Keratinocyte (primary cell): ENCODE measurements at regions of chr4 and their contacts with region 1.

Region 1: GRCh38 chr4:10535912-10536311 is 78.7 kb upstream of the ZNF518B start:
- DNase-seq: no peak
- H3K4me3 ChIP-seq: no peak overlapping the region
- H3K27ac ChIP-seq: no peak overlapping the region
- H3K4me1 ChIP-seq: no peaks in the 10 kb centered on the region
- H3K27me3 ChIP-seq: no peaks in the 10 kb centered on the region
- CTCF ChIP-seq: no peak

Region 2: GRCh38 chr4:10144966-10145365 is 390.9 kb before region 1 on chr4:
- dilution Hi-C with region 1: loop called (anchors 5 kb)
- DNase-seq: no peak
- H3K4me3 ChIP-seq: no peak overlapping the region
- H3K27ac ChIP-seq: no peak overlapping the region
- H3K4me1 ChIP-seq: no peaks in the 10 kb centered on the region
- H3K27me3 ChIP-seq: peaks cover 9% of the 10 kb centered on the region
- CTCF ChIP-seq: no peak

Region 3: DNA sequence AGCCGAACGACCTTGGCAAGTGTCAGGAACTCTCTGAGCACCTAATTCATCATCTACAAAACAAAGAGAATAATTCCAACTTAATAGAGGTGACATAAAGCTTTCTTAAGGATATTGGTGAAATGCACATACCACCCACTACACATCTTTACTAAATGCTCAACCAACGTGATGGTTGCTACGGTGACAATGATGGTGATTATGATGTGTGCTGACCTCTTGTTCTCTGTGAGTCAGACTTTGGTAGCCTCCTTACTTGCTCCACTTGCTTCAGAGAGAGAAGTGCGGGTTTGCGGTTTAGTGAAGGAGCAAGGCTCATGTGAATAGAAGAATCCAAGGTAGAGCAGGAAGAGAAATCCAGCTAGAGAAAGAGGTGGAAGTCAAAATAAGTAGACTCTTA is 201.4 kb after region 1 on chr4:
- dilution Hi-C with region 1: no loop called
- DNase-seq: no peak
- H3K4me3 ChIP-seq: no peak overlapping the region
- H3K27ac ChIP-seq: no peak overlapping the region
- H3K4me1 ChIP-seq: no peaks in the 10 kb centered on the region
- H3K27me3 ChIP-seq: no peaks in the 10 kb centered on the region
- CTCF ChIP-seq: no peak